Dorsolateral prefrontal cortex (tissue), 120 donors: ENCODE measurements at regions of chr20 and their contacts with region 1.

Region 1: DNA sequence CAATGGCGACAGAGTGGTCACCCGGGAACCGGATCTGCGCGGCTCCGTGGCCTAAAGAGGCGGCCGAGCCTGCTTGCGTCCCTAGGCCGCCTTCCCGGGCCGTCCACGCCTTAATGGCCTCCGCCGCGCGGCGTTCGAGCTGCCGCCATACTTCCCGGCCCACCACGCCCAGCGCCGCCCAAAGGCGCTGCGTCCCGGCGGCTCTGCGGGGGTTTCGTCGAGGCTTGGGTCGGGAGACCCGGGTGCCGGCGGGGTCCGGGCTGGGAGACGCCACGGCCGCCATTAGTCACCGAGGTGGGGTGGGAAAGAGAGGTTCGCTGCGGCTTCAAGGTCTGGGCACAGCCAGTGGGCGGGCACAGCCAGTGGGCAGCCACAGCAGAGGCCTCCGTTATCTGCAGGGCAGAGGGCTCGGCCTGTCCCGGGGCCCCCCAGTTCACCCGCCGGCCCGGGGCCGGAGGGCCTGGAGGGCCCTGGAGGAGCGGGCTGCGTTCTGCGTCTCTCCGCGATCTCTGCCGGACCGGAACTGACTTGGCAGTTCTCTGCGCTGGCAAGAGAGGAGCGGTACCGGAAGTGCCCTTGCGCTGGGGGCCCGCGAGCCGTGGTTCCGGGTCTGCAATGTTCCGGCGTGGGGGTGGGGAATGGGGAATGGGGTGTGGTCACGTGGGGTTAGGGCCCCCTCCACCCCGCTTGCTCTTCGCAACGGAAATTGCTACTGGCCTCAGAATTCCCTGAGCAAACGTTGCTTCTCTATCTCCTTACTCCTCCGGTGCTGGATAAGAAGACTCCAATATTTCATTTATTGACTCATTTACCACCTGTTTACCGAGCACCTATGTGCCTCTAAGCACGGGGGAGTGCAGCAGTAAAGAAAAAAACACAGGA is 82.3 kb downstream of the CNBD2 start:
- DNase-seq: peak; percentile 78 to 95 (median 90)
- H3K4me3 ChIP-seq: peak overlapping the region; percentile 59 to 100 (median 97)
- H3K27ac ChIP-seq: peak overlapping the region; percentile 18 to 99 (median 96)
- H3K27me3 ChIP-seq: no peaks in the 10 kb centered on the region
- CTCF ChIP-seq: peak in 21 of 56 donors; percentile 6 to 41 (median 22)

Region 2: GRCh38 chr20:35954200-35954906 is 96.3 kb before region 1 on chr20 and contains the start of gene SCAND1:
- intact Hi-C with region 1: loop called in 1 of 2 experiments (anchors 5 kb)
- DNase-seq: peak; percentile 87 to 97 (median 95)
- H3K4me3 ChIP-seq: peak within 1 kb of the TSS; percentile 69 to 100 (median 95)
- H3K27ac ChIP-seq: peak within 1 kb of the TSS; percentile 84 to 100 (median 96)
- H3K27me3 ChIP-seq: no peaks in the 10 kb centered on the region
- CTCF ChIP-seq: peak; percentile 88 to 100 (median 99)
- total RNA-seq, gene SCAND1: 20.1 to 63.9 (median 44.4) TPM

Region 3: GRCh38 chr20:36101192-36101591 is 50.5 kb after region 1 on chr20:
- intact Hi-C with region 1: no loop called
- DNase-seq: no peak
- H3K4me3 ChIP-seq: no peak overlapping the region
- H3K27ac ChIP-seq: peak overlapping the region in 2 of 59 donors; percentile 4 to 51
- H3K27me3 ChIP-seq: no peaks in the 10 kb centered on the region
- CTCF ChIP-seq: no peak

Region 4: GRCh38 chr20:36467076-36467999 is 416.7 kb after region 1 on chr20:
- intact Hi-C with region 1: no loop called
- DNase-seq: peak in 1 of 10 donors; percentile 78
- H3K4me3 ChIP-seq: peak overlapping the region in 1 of 59 donors; percentile 10
- H3K27ac ChIP-seq: peak overlapping the region in 55 of 59 donors; percentile 17 to 95 (median 68)
- H3K27me3 ChIP-seq: no peaks in the 10 kb centered on the region
- CTCF ChIP-seq: no peak